ENCODE measurements at regions of chr7 and their contacts with region 1.

Region 1: DNA sequence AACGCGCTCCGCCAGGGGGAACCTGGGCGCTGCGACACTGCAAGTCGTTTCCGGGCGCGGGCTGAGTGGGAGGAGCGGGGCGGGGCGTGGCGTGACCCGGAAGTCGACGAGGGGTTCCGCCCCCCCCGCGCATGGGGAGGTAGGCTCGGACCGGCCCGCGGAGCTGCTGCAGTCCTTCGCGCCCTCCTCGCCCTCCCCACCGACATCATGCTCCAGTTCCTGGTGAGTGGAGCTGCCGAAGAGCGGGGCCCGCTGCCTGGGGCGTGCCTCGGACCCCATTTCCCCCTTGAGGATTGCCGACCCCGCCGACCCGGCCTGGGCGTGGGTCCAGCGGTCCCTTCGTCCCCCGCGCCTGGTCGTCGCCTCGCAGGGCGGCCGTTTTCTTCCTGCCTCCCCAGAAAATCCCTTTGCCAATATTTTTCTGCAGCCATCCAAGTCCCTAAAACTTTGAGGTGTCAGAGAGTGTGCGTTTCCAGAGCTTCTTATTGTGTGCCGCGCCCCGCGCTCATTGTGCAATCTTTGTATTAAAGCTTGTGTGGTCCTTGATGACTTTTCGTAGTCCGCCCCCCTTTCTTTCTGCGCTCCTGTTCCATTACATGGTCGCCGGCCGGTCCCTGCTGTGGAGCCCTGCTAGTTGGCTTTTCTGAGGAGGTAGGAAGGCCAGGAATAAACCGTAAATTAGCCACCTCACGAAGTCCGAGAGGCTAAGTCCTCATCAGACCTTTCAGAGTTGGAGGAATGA is at the start of gene STMP1:
- DNase-seq: peak; percentile 97
- H3K4me3 Mint-ChIP-seq: peak within 1 kb of the TSS; percentile 98
- H3K27ac Mint-ChIP-seq: peak within 1 kb of the TSS; percentile 96
- H3K4me1 Mint-ChIP-seq: peaks cover 46% of the 10 kb centered on the region
- H3K27me3 Mint-ChIP-seq: no peaks in the 10 kb centered on the region
- total RNA-seq, gene STMP1: 21.5 to 21.6 TPM

Region 2: DNA sequence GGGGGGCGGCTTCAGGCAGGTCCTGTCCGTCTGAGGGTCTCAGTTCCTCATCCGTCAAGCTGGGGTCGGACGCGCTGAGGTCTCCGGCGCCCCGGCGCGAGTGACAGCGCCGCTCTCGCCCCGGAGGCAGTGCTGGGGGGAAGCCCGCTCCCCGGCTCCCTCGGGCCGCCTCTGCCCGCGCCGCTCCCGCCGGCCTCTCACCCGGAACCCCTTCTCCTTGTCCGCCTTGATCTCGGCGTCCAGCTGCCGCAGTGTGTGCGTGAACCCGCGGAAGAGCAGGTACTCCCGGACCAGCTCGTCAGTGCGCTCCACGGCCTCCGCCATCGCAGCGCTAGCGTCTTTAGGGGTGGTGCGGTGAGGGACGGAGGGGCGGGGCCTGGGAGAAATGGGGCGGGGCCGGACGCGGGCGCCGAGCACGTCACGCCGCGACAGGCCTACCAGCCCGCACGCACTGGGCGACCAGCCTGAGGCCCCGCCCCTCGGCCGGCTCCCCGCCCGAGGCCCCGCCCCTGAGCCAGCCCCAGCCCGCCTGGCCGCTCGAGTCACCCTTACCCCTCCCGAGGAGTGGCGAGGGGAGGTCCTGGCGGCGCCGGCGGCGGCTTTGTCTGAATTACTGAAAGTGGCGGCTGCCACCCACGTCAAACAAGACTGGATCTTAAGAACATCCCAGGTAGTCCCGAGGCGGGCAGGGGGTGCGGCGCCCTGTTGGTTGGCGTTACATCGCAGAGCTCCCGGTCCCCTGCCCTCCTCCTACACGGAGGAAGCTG is 451.2 kb before region 1 on chr7 and contains the start of gene WDR91:
- CTCF ChIA-PET with region 1: no interaction called
- intact Hi-C with region 1: loop called (anchors 1 kb)
- DNase-seq: peak; percentile 96
- H3K4me3 Mint-ChIP-seq: peak within 1 kb of the TSS; percentile 98
- H3K27ac Mint-ChIP-seq: peak within 1 kb of the TSS; percentile 85
- H3K4me1 Mint-ChIP-seq: peaks cover 41% of the 10 kb centered on the region
- H3K27me3 Mint-ChIP-seq: no peaks in the 10 kb centered on the region
- total RNA-seq, gene WDR91: 10.6 to 11.1 TPM

Region 3: GRCh38 chr7:135558337-135558767 is 104.2 kb before region 1 on chr7:
- CTCF ChIA-PET with region 1: interaction called, 3 read pairs
- intact Hi-C with region 1: loop called (anchors 1 kb)
- DNase-seq: peak; percentile 79
- H3K4me3 Mint-ChIP-seq: no peak overlapping the region
- H3K27ac Mint-ChIP-seq: no peak overlapping the region
- H3K4me1 Mint-ChIP-seq: peaks cover 29% of the 10 kb centered on the region
- H3K27me3 Mint-ChIP-seq: no peaks in the 10 kb centered on the region

Region 4: DNA sequence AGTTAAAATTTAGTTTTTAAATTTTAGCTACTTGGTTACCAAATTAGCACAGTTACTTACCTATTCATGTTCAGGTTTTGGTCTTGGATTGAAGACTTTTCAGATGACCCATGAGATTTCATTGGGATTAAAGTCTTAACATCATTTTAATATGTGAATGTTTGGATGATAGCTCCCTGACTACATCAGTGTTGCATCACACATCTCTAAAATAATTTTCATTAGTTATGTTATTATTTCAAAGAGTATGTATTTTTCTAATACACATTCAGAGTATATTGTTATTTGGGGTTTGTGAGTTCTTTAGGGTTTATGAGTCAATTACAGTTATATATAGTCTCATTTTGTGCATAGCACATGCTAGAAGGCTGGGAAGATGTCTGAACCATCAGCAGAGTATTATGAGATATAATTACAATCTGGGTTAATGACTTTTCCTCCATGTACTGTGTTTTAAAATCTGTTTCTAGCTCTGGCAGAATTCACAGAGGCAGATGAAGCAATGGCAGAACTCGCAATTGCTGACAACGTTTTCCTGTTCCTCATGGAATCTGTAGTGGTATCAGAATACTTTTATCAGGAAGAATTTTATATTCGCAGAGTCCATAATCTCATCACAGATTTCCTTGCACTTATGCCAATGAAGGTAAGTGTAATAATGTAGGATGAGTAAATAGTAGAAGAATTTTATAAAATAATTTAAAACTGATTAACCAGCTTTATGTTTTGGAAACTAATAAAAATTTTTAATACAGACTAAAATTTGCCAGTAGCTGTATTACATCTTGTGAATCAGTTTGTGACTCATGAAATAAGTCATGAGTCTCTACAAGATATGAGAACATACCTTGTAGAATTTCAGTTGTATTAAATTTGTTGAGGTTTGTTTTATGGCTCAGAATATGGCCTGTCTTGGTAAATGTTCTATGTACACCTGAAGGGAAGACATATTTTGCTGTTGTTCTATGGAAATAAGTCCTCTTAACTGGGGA is 77.9 kb before region 1 on chr7:
- CTCF ChIA-PET with region 1: no interaction called
- intact Hi-C with region 1: no loop called
- DNase-seq: no peak
- H3K4me3 Mint-ChIP-seq: no peak overlapping the region
- H3K27ac Mint-ChIP-seq: no peak overlapping the region
- H3K4me1 Mint-ChIP-seq: no peaks in the 10 kb centered on the region
- H3K27me3 Mint-ChIP-seq: no peaks in the 10 kb centered on the region

Region 5: DNA sequence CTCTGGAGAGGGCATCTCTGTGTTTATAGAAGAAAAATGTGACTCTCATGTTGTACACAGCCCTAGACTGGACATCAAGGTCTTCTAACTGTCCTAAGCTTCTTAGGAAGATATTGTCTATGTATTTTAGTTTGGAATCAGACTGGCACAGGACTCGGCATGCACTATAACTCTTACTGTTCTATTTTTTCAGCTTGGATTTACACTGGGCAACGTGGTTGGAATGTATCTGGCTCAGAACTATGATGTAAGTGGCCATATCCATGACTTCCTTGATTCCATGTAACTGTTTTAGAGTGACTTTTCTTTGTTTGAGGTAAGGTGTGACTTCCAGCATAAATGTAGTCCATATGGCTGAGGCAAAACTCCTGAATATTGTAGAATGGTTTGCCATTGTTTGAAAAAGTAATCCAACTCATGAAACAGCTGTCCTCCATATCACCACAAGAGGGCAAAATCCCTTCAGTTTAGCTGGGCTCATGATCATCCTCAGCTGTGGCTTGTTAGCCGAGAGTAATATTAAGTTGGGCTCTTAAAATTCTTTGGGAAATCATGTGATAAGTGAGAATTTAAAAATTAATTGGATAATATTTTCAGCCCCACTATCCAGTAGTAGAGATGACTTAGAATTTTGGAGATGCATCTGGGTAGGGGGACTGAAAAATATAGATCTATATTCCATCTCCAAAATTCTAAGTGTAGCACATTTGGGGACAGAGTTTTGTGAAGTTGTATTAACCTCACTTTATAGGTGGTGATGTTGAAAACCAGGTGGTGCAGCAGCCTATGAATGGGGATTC is 10.2 kb after region 1 on chr7:
- CTCF ChIA-PET with region 1: interaction called, 10 read pairs
- intact Hi-C with region 1: no loop called
- DNase-seq: no peak
- H3K4me3 Mint-ChIP-seq: no peak overlapping the region
- H3K27ac Mint-ChIP-seq: no peak overlapping the region
- H3K4me1 Mint-ChIP-seq: peaks cover 24% of the 10 kb centered on the region
- H3K27me3 Mint-ChIP-seq: no peaks in the 10 kb centered on the region

Region 6: DNA sequence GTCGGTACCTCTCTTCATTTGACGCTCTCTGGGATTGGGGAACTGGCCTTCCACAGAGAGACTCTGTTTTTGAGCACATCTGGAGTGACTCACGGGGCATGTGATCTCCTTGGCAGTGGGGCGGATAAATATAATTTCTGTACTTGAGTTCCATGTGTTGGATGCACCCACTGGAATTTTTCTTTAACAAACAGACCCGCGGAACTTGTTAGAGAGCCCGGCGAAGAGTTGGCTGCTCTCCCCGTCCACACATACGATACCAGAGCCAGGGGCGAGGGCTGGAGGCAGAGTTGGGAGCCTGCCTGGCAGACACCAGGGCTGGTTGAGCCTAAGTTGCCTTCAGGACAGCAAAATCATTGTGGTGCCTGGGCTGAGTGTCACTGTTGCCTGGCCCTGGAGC is 86.2 kb after region 1 on chr7 and contains the start of gene FAM180A:
- CTCF ChIA-PET with region 1: no interaction called
- intact Hi-C with region 1: no loop called
- DNase-seq: no peak
- H3K4me3 Mint-ChIP-seq: no peak within 1 kb of the TSS
- H3K27ac Mint-ChIP-seq: no peak within 1 kb of the TSS
- H3K4me1 Mint-ChIP-seq: no peaks in the 10 kb centered on the region
- H3K27me3 Mint-ChIP-seq: peaks cover 2% of the 10 kb centered on the region
- total RNA-seq, gene FAM180A: not detected

Region 7: DNA sequence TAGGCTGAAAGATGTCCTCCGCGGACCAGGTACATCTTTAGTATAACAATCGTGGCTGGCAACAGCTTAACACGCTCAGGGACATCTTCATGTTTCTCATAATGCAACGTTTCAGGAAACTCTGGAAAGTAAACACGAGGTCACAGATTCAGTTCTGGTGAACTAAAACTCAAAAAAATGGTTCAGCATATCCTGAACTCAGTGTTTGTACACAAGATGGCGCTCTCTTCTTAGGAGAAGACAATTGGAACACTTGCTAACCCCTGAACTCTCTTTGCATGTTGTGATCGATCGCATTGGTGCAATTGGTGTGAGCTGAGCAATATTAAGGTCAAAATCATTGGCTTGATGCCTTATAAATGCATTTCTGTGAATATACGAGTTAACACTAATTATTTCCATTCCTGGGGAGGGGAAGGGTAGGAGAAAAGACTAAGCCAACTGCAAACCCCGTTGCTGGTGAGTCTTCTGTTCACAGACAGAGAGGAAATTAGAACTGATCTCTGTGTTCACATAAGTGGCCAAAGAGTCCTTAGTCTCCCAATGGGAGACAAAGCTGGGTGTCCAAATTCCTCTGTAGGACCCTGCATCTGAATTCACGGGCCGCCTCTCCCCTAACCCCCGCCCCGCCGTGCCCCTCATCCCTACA is 138.6 kb after region 1 on chr7:
- CTCF ChIA-PET with region 1: no interaction called
- intact Hi-C with region 1: loop called (anchors 1 kb)
- DNase-seq: peak; percentile 37
- H3K4me3 Mint-ChIP-seq: no peak overlapping the region
- H3K27ac Mint-ChIP-seq: no peak overlapping the region
- H3K4me1 Mint-ChIP-seq: peaks cover 2% of the 10 kb centered on the region
- H3K27me3 Mint-ChIP-seq: peaks cover 10% of the 10 kb centered on the region

Region 8: DNA sequence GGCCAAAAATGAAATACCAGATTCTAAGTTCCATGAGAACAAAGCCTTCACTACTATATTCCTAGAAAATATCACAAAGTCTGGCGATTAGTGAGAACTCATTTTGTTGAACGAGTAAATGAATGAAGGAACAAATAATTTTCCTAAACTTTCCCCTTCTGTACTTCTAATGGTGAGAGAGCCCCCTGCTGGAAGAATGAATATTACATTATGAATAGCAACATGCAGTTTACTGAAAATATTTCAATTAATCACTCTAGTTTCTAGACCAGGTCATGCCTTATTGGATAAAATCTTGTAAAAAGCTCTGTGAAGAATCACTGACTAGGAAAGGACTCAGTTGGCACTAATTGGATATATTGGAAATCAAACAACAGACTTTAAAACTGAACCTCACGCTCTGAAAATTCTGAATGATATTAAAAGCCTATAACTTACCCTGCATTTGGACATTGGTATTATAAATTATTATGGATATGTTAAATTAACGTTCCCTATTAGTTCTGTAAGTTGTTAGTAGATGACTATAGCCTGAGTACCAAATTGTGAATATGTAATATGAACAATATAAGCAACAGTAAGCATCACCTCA is 347.0 kb after region 1 on chr7:
- CTCF ChIA-PET with region 1: no interaction called
- intact Hi-C with region 1: loop called (anchors 2 kb)
- DNase-seq: no peak
- H3K4me3 Mint-ChIP-seq: no peak overlapping the region
- H3K27ac Mint-ChIP-seq: no peak overlapping the region
- H3K4me1 Mint-ChIP-seq: peaks cover 4% of the 10 kb centered on the region
- H3K27me3 Mint-ChIP-seq: peaks cover 10% of the 10 kb centered on the region

Region 9: DNA sequence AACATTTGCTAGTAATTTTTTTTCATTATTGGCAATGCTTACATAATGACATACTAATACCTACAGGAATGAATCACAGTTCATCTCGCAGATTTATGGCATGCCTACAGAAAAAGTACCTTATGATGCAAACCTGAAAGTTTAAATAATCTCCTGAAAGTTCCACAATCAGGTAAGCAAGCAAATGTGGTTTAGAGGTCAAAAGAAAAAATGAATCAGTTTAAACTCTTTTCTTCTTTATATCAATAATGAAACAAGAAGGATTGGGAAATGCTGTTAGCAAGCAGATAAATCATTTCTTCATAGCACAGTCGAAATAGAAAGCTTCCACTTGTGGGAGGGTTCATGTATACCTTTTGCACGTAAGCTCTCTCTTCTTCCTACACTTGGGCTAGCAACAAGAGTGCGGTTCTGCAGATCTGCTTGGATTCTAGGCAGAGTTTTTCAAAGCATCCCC is 368.3 kb after region 1 on chr7:
- CTCF ChIA-PET with region 1: no interaction called
- intact Hi-C with region 1: loop called (anchors 1 kb)
- DNase-seq: peak; percentile 38
- H3K4me3 Mint-ChIP-seq: no peak overlapping the region
- H3K27ac Mint-ChIP-seq: peak overlapping the region; percentile 80
- H3K4me1 Mint-ChIP-seq: peaks cover 59% of the 10 kb centered on the region
- H3K27me3 Mint-ChIP-seq: peaks cover 13% of the 10 kb centered on the region

Measured in activated naive CD4-positive, alpha-beta T cell treated with anti-CD3 and anti-CD28 coated beads for 36 hours (primary cell).